Dendritic cell treated with granulocyte-macrophage colony-stimulating factor and Interleukin-4, amounts not matched to agents 40 ng/mL and 50 ng/mL, for 4 days (primary cell): ENCODE measurements at regions of chr10 and their contacts with region 1.

Region 1: GRCh38 chr10:70815504-70816219 is at the start of gene SGPL1:
- H3K4me3 Mint-ChIP-seq: peak within 1 kb of the TSS; percentile 96
- H3K27ac Mint-ChIP-seq: peak within 1 kb of the TSS; percentile 93
- H3K4me1 Mint-ChIP-seq: peaks cover 43% of the 10 kb centered on the region
- H3K27me3 Mint-ChIP-seq: no peaks in the 10 kb centered on the region

Region 2: DNA sequence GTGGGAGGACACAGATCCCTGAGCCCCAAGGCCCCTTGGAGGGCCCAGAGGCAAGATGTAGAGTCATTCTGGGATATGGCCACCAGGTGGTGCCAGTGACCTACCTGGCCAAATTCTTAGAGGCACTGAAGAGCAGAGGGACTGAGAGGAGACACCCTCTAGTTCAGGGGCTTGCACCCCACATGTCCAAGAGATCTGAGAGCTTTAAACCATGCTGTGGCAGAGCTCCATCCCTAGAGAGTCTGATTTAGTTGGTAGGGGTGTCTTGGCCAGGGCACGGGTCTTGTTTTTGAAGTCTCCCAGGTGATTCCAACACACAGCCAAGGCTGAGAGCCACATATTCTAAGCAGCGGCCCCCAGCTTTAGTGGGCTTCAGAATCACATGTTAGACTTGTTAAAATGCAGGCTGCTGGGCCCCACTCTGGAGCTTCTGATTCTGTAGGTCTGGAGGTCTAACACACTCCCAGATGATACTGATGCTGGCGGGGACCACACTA is 265.7 kb before region 1 on chr10:
- intact Hi-C with region 1: loop called (anchors 5 kb)
- H3K4me3 Mint-ChIP-seq: no peak overlapping the region
- H3K27ac Mint-ChIP-seq: no peak overlapping the region
- H3K4me1 Mint-ChIP-seq: peaks cover 1% of the 10 kb centered on the region
- H3K27me3 Mint-ChIP-seq: no peaks in the 10 kb centered on the region

Region 3: GRCh38 chr10:70682920-70683600 is 132.6 kb before region 1 on chr10:
- intact Hi-C with region 1: no loop called
- H3K4me3 Mint-ChIP-seq: no peak overlapping the region
- H3K27ac Mint-ChIP-seq: peak overlapping the region; percentile 43
- H3K4me1 Mint-ChIP-seq: peaks cover 59% of the 10 kb centered on the region
- H3K27me3 Mint-ChIP-seq: peaks cover 13% of the 10 kb centered on the region

Region 4: GRCh38 chr10:70832852-70833528 is 17.3 kb after region 1 on chr10:
- intact Hi-C with region 1: loop called (anchors 2 kb)
- H3K4me3 Mint-ChIP-seq: peak overlapping the region; percentile 68
- H3K27ac Mint-ChIP-seq: peak overlapping the region; percentile 88
- H3K4me1 Mint-ChIP-seq: peaks cover 86% of the 10 kb centered on the region
- H3K27me3 Mint-ChIP-seq: no peaks in the 10 kb centered on the region

Region 5: DNA sequence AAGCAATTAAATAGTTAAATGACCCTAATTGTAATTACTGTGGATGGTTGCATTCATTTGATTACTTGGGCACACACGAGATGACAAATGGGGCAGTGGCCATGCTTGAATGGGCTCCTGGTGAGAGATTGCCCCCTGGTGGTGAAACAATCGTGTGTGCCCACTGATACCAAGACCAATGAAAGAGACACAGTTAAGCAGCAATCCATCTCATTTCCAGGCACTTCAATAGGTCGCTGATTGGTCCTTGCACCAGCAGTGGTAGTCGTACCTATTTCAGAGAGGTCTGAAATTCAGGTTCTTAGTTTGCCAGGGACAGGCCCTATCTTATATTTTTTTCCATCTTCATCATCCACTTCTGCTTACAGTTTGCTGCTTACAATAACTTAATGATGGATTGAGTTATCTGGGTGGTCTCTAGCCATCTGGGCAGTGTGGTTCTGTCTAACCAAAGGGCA is 64.4 kb after region 1 on chr10:
- intact Hi-C with region 1: loop called (anchors 1 kb)
- H3K4me3 Mint-ChIP-seq: no peak overlapping the region
- H3K27ac Mint-ChIP-seq: peak overlapping the region; percentile 78
- H3K4me1 Mint-ChIP-seq: peaks cover 20% of the 10 kb centered on the region
- H3K27me3 Mint-ChIP-seq: no peaks in the 10 kb centered on the region